PC-3 (cell line): ENCODE measurements at regions of chr11 and their contacts with region 1.

Region 1: GRCh38 chr11:19553683-19554333 is 158.8 kb upstream of the NAV2 start:
- DNase-seq: peak; percentile 86
- ATAC-seq: peak; percentile 71
- H3K4me3 ChIP-seq: no peak overlapping the region
- H3K27ac ChIP-seq: no peak overlapping the region
- H3K4me1 ChIP-seq: no peaks in the 10 kb centered on the region
- H3K27me3 ChIP-seq: no peaks in the 10 kb centered on the region
- CTCF ChIP-seq: peak; percentile 89

Region 2: DNA sequence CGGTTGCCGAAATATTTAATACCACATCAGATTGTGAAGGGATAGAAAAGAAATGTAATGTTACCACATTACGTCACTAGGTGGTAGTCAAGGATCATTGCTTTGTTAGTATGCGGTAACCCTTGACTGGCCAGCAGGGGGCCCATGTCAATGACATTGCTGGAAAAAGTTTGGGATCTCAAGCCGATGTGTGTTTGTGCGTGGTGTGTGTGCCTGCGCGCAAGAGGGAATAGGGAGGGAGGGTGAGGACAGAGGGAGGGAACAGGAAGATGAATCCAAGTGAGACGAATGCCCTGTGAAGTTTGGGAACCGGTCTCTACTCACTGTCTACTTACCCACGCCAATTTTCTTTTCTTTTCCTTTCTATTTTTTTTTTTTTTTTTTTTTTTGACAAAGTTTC is 482.6 kb before region 1 on chr11:
- CTCF ChIA-PET with region 1: no interaction called
- POLR2A ChIA-PET with region 1: no interaction called
- intact Hi-C with region 1: loop called (anchors 1 kb)
- DNase-seq: peak; percentile 87
- ATAC-seq: peak; percentile 96
- H3K4me3 ChIP-seq: peak overlapping the region; percentile 35; the same call in 1 of the 2 replicates
- H3K27ac ChIP-seq: no peak overlapping the region
- H3K4me1 ChIP-seq: peaks cover 14% of the 10 kb centered on the region
- H3K27me3 ChIP-seq: no peaks in the 10 kb centered on the region
- CTCF ChIP-seq: peak; percentile 98

Region 3: GRCh38 chr11:19326499-19326898 is 227.3 kb before region 1 on chr11:
- CTCF ChIA-PET with region 1: interaction called, 15 read pairs
- POLR2A ChIA-PET with region 1: no interaction called
- intact Hi-C with region 1: loop called (anchors 1 kb)
- DNase-seq: peak; percentile 39
- ATAC-seq: peak; percentile 64
- H3K4me3 ChIP-seq: no peak overlapping the region
- H3K27ac ChIP-seq: no peak overlapping the region
- H3K4me1 ChIP-seq: no peaks in the 10 kb centered on the region
- H3K27me3 ChIP-seq: peaks cover 35% of the 10 kb centered on the region
- CTCF ChIP-seq: peak; percentile 64

Region 4: DNA sequence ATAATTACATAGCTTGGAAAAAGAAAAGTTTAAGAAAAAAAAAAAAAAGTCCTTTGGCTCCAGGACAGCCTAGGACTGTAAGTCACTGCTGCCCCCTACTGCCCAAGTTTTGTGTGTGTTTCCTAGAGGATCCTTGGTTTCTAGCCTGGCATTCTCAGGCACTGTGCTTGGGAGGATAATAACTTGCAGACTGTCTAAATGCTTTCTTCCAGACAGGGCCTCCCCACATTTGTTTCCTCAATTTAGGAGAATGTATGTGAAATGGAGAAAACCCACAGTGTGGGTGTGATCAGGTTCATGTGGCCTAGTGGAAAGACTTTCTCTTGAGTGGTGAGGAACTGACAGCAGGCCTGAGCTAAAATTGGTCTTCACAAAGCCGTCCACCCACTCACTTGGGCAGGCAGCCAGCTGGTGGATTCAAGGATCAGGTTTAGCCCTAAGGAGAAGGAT is 349.8 kb after region 1 on chr11:
- CTCF ChIA-PET with region 1: interaction called, 16 read pairs
- POLR2A ChIA-PET with region 1: no interaction called
- intact Hi-C with region 1: loop called (anchors 1 kb)
- DNase-seq: peak; percentile 78
- ATAC-seq: peak; percentile 86
- H3K4me3 ChIP-seq: no peak overlapping the region
- H3K27ac ChIP-seq: no peak overlapping the region
- H3K4me1 ChIP-seq: no peaks in the 10 kb centered on the region
- H3K27me3 ChIP-seq: no peaks in the 10 kb centered on the region
- CTCF ChIP-seq: peak; percentile 84

Region 5: GRCh38 chr11:20363500-20364411 is 809.9 kb after region 1 on chr11 and contains the start of gene HTATIP2:
- CTCF ChIA-PET with region 1: no interaction called
- POLR2A ChIA-PET with region 1: no interaction called
- intact Hi-C with region 1: loop called (anchors 5 kb)
- DNase-seq: peak; percentile 54
- ATAC-seq: peak; percentile 57
- H3K4me3 ChIP-seq: peak within 1 kb of the TSS; percentile 67
- H3K27ac ChIP-seq: peak within 1 kb of the TSS; percentile 89
- H3K4me1 ChIP-seq: peaks cover 60% of the 10 kb centered on the region
- H3K27me3 ChIP-seq: no peaks in the 10 kb centered on the region
- CTCF ChIP-seq: no peak
- total RNA-seq, gene HTATIP2: 39.7 and 48.3 TPM in 2 replicates